ENCODE measurements at regions of chr4 and their contacts with region 1.

Region 1: DNA sequence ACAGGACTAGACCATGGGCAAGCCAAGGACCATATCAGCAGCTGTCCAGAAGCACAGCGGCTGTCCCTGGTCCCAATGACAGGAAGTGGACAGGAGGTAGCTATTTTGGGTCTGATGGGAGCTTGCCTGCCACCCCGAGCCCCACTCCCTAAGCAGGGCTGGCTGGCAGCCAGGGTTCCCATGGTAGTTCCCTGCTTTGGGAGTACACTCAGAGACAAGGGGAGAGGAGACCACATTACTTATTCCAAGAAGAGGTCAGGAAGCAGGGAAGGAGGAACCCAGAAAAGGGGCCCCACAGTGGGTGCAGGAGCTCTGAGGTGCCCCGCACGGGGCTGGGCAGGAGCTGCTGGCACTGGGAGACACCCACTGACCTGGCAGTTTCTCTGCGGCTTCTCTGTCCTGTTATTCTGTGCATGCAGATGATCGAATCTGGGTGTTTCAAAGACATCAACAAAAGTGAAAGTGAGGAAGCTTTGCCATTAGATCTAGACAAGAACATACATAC is 36.3 kb downstream of the HTT-AS start:
- DNase-seq: peak in 2 of 4 donors; percentile 8 to 15
- ATAC-seq: no peak
- H3K4me3 ChIP-seq: no peak overlapping the region
- H3K27ac ChIP-seq: no peak overlapping the region
- H3K4me1 ChIP-seq: peaks cover 17% of the 10 kb centered on the region
- H3K27me3 ChIP-seq: no peaks in the 10 kb centered on the region
- CTCF ChIP-seq: no peak
- POLR2A ChIP-seq: no peak

Region 2: GRCh38 chr4:2761035-2761923 is 276.7 kb before region 1 on chr4:
- intact Hi-C with region 1: loop called (anchors 10 kb)
- DNase-seq: peak; percentile 75 to 87 (median 85)
- ATAC-seq: peak; percentile 58
- H3K4me3 ChIP-seq: no peak overlapping the region
- H3K27ac ChIP-seq: peak overlapping the region; percentile 82 to 93 (median 88)
- H3K4me1 ChIP-seq: peaks cover 46% of the 10 kb centered on the region
- H3K27me3 ChIP-seq: no peaks in the 10 kb centered on the region
- CTCF ChIP-seq: peak in 4 of 7 experiments; percentile 16 to 41 (median 26)
- POLR2A ChIP-seq: peak in 2 of 3 donors; percentile 16 to 54

Region 3: GRCh38 chr4:2981256-2981819 is 56.7 kb before region 1 on chr4:
- intact Hi-C with region 1: loop called (anchors 10 kb)
- DNase-seq: no peak
- ATAC-seq: no peak
- H3K4me3 ChIP-seq: no peak overlapping the region
- H3K27ac ChIP-seq: no peak overlapping the region
- H3K4me1 ChIP-seq: no peaks in the 10 kb centered on the region
- H3K27me3 ChIP-seq: no peaks in the 10 kb centered on the region
- CTCF ChIP-seq: no peak
- POLR2A ChIP-seq: no peak

Region 4: GRCh38 chr4:3563403-3563802 is 525.4 kb after region 1 on chr4:
- intact Hi-C with region 1: no loop called
- DNase-seq: no peak
- ATAC-seq: no peak
- H3K4me3 ChIP-seq: no peak overlapping the region
- H3K27ac ChIP-seq: no peak overlapping the region
- H3K4me1 ChIP-seq: peaks cover 4% of the 10 kb centered on the region
- H3K27me3 ChIP-seq: no peaks in the 10 kb centered on the region
- CTCF ChIP-seq: no peak
- POLR2A ChIP-seq: no peak

Measured in body of pancreas (tissue), 4 donors.